ENCODE measurements at regions of chr1 and their contacts with region 1.

Region 1: GRCh38 chr1:6646499-6647148 is 22.0 kb downstream of the THAP3 start:
- DNase-seq: no peak
- H3K4me3 ChIP-seq: no peak overlapping the region
- H3K27ac ChIP-seq: no peak overlapping the region
- H3K4me1 ChIP-seq: no peaks in the 10 kb centered on the region
- H3K27me3 ChIP-seq: no peaks in the 10 kb centered on the region
- CTCF ChIP-seq: peak; percentile 68 to 81

Region 2: DNA sequence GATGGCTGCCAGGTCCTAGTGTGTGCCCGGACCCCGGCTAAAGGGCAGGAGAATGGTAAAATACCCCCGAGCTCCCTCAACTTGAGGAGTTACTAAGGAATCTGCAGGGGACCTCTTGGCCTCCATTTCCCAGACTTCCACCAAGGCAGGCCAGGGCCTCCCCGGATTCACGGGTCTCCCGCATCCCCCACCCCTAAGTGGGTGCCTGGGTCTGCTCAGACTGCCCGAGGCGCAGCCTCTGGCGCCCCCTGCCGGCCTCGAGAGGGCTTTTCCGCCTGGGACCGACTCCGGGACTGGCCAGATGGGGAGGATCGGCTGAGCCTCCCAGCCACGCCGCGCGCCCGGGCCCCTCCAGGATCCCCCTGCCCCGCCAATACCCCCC is 156.8 kb before region 1 on chr1:
- intact Hi-C with region 1: loop called (anchors 5 kb)
- DNase-seq: peak; percentile 42 to 80
- H3K4me3 ChIP-seq: peak overlapping the region; percentile 48 to 53
- H3K27ac ChIP-seq: no peak overlapping the region
- H3K4me1 ChIP-seq: peaks cover 5 to 47% (median 31%) of the 10 kb centered on the region in 4 donors
- H3K27me3 ChIP-seq: peaks cover 0 to 36% of the 10 kb centered on the region in 2 donors
- CTCF ChIP-seq: peak; percentile 65 to 90

Region 3: DNA sequence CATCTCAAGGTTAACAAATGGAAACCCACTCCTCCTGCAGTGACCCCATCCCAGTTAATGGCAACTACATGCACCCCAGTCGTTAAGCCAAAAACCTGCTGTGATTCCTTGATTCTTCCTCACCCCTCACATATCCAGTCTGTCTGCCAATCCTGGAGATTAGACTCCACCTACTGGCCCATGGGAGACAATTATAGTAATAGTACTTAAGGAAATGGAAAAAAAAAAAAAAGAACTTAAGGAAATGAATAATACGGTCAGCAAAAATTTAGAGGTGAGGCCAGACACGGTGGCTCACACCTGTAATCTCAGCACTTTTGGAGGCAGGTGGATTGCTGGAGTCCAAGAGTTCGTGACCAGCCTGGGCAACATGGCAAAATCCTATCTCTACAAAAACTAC is 99.3 kb before region 1 on chr1:
- intact Hi-C with region 1: loop called (anchors 5 kb)
- DNase-seq: no peak
- H3K4me3 ChIP-seq: no peak overlapping the region
- H3K27ac ChIP-seq: no peak overlapping the region
- H3K4me1 ChIP-seq: no peaks in the 10 kb centered on the region
- H3K27me3 ChIP-seq: no peaks in the 10 kb centered on the region
- CTCF ChIP-seq: no peak

Region 4: DNA sequence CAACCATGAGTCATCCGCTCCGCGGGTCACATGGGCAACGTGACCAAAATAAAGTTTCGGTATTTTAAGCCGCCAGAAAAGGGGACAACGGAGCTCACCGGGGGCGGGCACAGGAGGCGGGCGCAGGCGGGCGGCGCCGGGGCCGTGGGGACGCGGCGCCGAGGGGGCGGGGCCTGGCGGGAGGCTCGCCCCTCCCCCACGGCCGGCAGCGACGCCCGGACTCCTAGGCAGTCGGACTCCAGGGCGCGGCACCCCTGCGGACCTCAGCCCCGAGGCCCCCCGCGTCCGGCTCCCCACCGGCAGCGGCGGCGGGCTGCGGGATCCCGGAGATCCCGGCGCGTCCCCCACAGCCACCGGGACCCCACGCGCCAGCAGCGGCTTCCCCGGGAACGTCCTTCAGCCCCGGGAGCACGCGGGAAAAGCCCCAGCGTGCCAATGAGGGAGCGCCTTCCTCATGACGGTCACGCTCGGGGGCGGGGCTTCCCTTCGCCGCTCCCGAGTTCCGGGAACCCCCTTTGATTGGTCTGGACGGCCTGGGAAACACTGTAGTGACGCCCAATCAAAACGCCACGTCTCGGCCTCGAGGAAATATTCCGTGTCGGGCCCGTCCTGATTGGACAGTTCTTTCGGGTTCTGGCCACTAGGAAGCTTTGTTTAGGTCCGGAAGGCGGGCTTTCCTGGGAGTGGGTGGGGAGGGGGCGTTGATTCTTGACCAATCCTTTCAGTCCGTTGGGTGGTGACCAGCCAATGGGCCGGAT is 138.1 kb after region 1 on chr1:
- intact Hi-C with region 1: no loop called
- DNase-seq: peak; percentile 100
- H3K4me3 ChIP-seq: peak overlapping the region; percentile 81
- H3K27ac ChIP-seq: peak overlapping the region; percentile 98
- H3K4me1 ChIP-seq: peaks cover 0 to 47% (median 22%) of the 10 kb centered on the region in 4 donors
- H3K27me3 ChIP-seq: no peaks in the 10 kb centered on the region
- CTCF ChIP-seq: peak in 1 of 2 experiments; percentile 48

Measured in tibial artery (tissue), 4 donors.